HepG2 (cell line): ENCODE measurements at regions of chr7 and their contacts with region 1.

Region 1: GRCh38 chr7:97006036-97006815 is 873 bp downstream of the DLX6 start:
- DNase-seq: peak; percentile 72
- ATAC-seq: peak; percentile 85
- H3K4me3 ChIP-seq: peak overlapping the region; percentile 78 to 80 (median 79)
- H3K27ac ChIP-seq: peak overlapping the region; percentile 90
- H3K4me1 ChIP-seq: peaks cover 35% of the 10 kb centered on the region
- H3K27me3 ChIP-seq: no peaks in the 10 kb centered on the region; a peak in 1 of 5 replicates
- CTCF ChIP-seq: peak; percentile 47
- EP300 ChIP-seq: 0 out of 4 replicates have a peak, but pooled peaks of 1 of the 2 experiments have one; percentile 11
- POLR2A ChIP-seq: peak; percentile 71 to 77
- RAD21 ChIP-seq: no peak; the same call in 1 of the 2 replicates

Region 2: DNA sequence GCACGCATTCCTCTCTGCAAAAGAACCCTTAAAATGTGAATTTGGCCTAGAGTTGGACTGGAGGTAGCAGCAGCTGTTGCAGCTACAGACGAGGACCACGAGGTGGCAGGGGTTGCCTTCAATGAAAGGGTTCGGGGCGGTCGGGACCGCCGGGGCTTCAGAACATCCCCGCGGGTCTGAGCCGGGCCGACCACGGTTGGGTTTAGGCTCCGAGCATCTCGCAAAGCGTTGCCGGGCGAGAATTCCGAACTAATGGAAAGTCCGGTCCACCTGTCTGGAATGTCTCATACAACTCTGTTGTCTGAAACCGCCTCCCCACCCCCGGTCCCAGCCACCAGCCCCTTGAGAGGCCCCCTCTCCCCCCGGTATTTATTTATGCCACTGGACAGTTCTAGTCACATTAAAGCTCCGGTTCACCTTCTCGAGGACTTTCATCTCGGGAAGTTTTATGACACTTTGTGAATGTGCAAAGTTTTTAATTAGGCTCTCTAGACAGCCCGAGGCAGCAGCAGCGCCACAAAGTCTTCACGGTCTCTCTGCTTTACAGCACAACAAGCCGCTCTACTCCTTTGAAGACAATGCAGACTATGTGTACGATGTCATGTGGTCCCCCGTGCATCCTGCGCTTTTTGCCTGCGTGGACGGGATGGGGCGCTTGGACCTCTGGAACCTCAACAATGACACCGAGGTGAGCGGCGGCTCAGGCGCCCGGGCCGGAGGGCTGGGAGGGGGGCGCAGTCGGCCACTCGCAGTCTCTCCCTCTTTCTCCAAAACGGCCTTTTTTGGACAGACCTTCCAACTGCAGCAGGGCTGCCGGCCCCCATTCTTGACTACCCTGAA is 930.5 kb before region 1 on chr7:
- CTCF ChIA-PET with region 1: no interaction called
- POLR2A ChIA-PET with region 1: no interaction called
- in situ Hi-C with region 1: no loop called
- intact Hi-C with region 1: loop called (anchors 5 kb)
- DNase-seq: peak; percentile 55
- ATAC-seq: peak; percentile 99
- H3K4me3 ChIP-seq: peak overlapping the region; percentile 53 to 56 (median 56)
- H3K27ac ChIP-seq: no peak overlapping the region
- H3K4me1 ChIP-seq: peaks cover 7% of the 10 kb centered on the region
- H3K27me3 ChIP-seq: peaks cover 3 to 14% of the 10 kb centered on the region in 2 experiments; a peak in 3 of 5 replicates
- CTCF ChIP-seq: peak; percentile 91
- EP300 ChIP-seq: no peak
- POLR2A ChIP-seq: no peak
- RAD21 ChIP-seq: peak; percentile 90

Region 3: DNA sequence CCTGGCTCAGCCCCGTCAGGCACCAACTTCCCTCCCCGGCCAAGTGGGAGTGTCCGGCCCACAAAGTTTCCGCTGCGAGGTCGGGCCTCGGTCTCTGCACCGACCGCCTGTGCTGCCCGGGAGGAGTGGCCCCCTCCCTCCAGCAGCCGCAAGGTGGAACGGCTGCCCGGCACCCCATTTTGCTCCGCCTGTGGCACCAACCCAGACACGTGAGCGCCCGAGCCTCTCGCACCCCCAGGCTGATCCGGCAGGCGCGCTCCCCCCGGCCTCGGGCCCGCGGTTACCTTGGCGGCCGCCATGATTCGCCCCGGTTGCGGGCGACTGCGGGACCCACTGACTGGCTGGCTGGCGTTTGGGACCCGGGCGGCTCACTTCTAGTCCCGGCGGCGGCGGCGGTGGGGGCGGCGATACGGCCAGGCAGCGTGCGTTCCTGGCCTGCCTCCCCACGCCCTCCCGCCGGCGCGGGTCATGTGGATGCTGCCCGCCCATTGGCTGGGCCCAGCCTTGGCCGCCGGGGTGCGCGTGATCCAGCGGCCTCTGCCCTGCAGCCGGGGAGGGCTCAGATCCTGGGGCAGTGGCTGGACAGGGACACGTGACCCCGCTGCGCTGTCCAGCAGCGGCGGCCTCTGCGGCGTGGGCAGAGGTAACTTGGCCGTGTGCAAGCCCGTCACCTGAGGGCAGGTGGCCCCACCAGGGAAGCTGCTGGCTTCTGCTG is 684.4 kb before region 1 on chr7 and contains the start of gene SLC25A13:
- CTCF ChIA-PET with region 1: no interaction called
- POLR2A ChIA-PET with region 1: no interaction called
- in situ Hi-C with region 1: loop called (anchors 25 kb)
- intact Hi-C with region 1: loop called (anchors 5 kb)
- DNase-seq: peak; percentile 86
- ATAC-seq: peak; percentile 96
- H3K4me3 ChIP-seq: peak within 1 kb of the TSS; percentile 76 to 93 (median 91)
- H3K27ac ChIP-seq: peak within 1 kb of the TSS; percentile 98
- H3K4me1 ChIP-seq: peaks cover 51% of the 10 kb centered on the region
- H3K27me3 ChIP-seq: no peaks in the 10 kb centered on the region
- CTCF ChIP-seq: peak; percentile 51
- EP300 ChIP-seq: peak; percentile 55 to 58; a peak in 3 of 4 replicates
- POLR2A ChIP-seq: peak; percentile 31 to 56; a peak in 2 of 4 replicates
- RAD21 ChIP-seq: peak; percentile 9
- total RNA-seq, gene SLC25A13: 84.9 and 112 TPM in 2 replicates

Region 4: GRCh38 chr7:96833676-96834453 is 172.4 kb before region 1 on chr7:
- CTCF ChIA-PET with region 1: no interaction called
- POLR2A ChIA-PET with region 1: interaction called, 11 read pairs
- in situ Hi-C with region 1: no loop called
- intact Hi-C with region 1: loop called (anchors 1 kb)
- DNase-seq: peak; percentile 95
- ATAC-seq: peak; percentile 86
- H3K4me3 ChIP-seq: peak overlapping the region in 1 of 3 experiments; percentile 11; a peak in 1 of 6 replicates
- H3K27ac ChIP-seq: peak overlapping the region; percentile 77
- H3K4me1 ChIP-seq: peaks cover 44% of the 10 kb centered on the region
- H3K27me3 ChIP-seq: no peaks in the 10 kb centered on the region
- CTCF ChIP-seq: no peak
- EP300 ChIP-seq: peak; percentile 71 to 95; a peak in 3 of 4 replicates
- POLR2A ChIP-seq: no peak
- RAD21 ChIP-seq: no peak

Region 5: DNA sequence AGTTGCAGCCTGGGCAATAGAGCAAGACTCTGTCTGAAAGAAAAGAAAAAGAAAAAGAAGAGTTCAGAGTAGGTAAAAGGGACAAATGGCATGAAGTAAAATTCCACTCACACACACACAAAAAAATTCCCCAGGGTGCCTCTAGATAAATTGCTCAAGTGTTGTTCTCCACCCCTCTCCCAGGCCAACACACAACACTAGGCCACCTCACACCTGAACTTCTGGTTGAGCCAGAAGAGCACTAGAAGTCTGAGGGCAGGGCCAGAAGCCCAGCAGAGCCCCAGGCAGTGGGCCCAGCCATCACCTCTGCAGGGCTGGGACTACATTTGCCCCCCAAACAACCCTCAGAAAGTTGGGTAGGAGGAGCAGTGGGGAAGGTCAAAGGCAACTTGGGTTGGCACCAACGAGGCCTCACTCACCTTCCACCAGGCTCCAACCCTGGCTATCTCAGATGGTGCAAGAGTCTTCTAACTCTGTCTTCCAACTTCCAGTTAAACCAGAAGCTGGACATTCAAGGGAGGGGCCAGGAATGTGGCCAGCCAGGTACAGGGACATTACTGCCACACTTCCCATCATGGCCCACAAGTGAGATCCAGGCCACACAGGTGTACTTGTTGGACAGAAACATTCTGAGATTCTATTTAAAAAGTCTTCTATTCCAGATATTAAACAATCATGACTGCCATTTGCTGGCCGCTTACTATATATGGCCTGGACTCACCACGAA is 26.5 kb before region 1 on chr7:
- CTCF ChIA-PET with region 1: no interaction called
- POLR2A ChIA-PET with region 1: interaction called, 11 read pairs
- in situ Hi-C with region 1: no loop called
- intact Hi-C with region 1: no loop called
- DNase-seq: no peak
- ATAC-seq: no peak
- H3K4me3 ChIP-seq: no peak overlapping the region
- H3K27ac ChIP-seq: no peak overlapping the region
- H3K4me1 ChIP-seq: peaks cover 37% of the 10 kb centered on the region
- H3K27me3 ChIP-seq: no peaks in the 10 kb centered on the region
- CTCF ChIP-seq: no peak
- EP300 ChIP-seq: no peak
- POLR2A ChIP-seq: no peak
- RAD21 ChIP-seq: no peak

Region 6: GRCh38 chr7:97016381-97017191 is 10.4 kb after region 1 on chr7:
- CTCF ChIA-PET with region 1: no interaction called
- POLR2A ChIA-PET with region 1: interaction called, 163 read pairs
- in situ Hi-C with region 1: no loop called
- intact Hi-C with region 1: loop called (anchors 1 kb)
- DNase-seq: peak; percentile 76
- ATAC-seq: peak; percentile 90
- H3K4me3 ChIP-seq: peak overlapping the region; percentile 77 to 83 (median 79)
- H3K27ac ChIP-seq: peak overlapping the region; percentile 79
- H3K4me1 ChIP-seq: peaks cover 26% of the 10 kb centered on the region
- H3K27me3 ChIP-seq: no peaks in the 10 kb centered on the region
- CTCF ChIP-seq: peak; percentile 75
- EP300 ChIP-seq: no peak
- POLR2A ChIP-seq: peak; percentile 56 to 82; a peak in 3 of 4 replicates
- RAD21 ChIP-seq: peak; percentile 46; the same call in 1 of the 2 replicates